ENCODE measurements at regions of chr3 and their contacts with region 1.

Region 1: DNA sequence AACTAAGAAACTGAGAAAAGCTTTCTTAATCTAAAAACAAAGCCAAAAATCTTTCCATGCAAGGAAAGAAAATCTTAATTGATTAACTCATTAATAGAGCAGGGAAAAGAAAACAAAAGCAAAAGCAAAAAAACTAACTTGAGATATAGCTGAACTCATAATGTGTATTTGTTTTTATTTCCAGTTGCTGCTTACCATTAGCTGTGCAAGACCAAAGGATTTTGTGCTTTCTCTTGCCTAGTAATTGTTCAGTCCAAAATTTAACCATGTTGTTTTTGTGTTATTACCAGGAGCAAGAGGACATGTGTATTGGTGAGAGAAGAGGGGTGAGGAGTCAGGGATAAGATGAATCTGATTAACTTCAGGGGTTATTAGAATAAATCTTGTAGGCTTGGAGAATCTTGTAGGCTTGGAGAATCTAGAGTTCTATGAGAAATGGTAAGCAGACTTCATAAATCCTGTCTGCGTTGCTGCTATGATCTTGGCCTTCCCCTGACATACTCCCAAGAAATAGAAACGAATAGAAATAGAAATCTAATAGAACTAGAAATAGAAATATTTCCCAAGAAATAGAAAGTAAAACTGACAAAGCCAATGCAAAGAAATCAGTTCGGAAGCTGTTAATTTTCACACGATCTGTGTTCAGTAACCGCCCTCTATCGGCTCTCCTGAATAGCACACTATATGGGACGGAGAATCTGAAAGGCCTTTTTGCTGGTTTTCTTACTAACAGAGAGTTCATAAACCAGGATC is 72.6 kb upstream of the TNFSF10 start:
- DNase-seq: peak in 1 of 2 donors; percentile 25
- ATAC-seq: peak; percentile 68

Region 2: GRCh38 chr3:172511783-172512762 is 83.7 kb before region 1 on chr3:
- intact Hi-C with region 1: loop called in 1 of 2 experiments (anchors 10 kb)
- DNase-seq: peak; percentile 49 to 65
- ATAC-seq: no peak

Measured in left colon (tissue), 2 donors.